ENCODE measurements at regions of chr7 and their contacts with region 1.

Region 1: DNA sequence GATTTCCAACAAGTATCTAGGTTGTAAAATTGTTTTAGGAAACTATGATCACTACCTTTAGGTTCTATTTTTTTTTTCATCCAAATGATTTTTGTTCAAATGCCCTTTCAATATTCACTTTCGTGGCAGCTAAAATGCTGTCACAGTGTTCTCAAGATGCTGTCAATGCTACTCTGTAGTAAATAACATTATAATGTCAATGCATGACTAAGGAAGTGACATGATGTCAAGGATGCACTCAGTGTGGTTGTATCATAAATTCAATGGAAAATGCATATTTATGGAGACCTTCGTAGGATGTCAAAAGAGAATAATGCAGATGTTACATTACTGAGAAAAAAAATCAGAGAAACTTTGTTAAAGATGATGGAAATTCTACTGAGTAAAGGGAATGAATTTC is 673.8 kb downstream of the ANKRD7 start:
- DNase-seq: no peak
- H3K4me3 ChIP-seq: no peak overlapping the region
- H3K4me3 Mint-ChIP-seq: no peak overlapping the region
- H3K27ac ChIP-seq: no peak overlapping the region
- H3K27ac Mint-ChIP-seq: no peak overlapping the region
- H3K4me1 ChIP-seq: no peaks in the 10 kb centered on the region
- H3K4me1 Mint-ChIP-seq: no peaks in the 10 kb centered on the region
- H3K27me3 ChIP-seq: no peaks in the 10 kb centered on the region
- H3K27me3 Mint-ChIP-seq: no peaks in the 10 kb centered on the region

Region 2: DNA sequence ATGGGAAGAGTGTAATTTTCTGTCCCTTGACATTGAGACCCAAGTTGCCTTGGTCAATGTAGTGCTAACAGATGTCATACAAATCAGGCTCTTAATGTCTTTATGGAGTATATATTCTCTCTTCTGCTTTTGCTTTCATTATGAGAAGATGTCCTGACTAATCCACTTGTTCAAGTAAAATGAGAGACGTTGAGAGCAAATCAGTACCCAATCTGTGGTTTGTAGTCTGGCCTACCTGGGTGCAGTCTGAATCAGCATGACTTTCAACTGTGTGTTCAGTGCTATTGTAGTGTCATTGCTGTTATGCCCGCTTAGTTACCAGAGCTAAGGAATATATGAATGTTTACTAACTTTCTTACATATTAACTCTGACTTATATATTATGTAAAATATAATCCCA is 61.4 kb before region 1 on chr7:
- CTCF ChIA-PET with region 1: no interaction called
- POLR2A ChIA-PET with region 1: no interaction called
- intact Hi-C with region 1: loop called (anchors 10 kb)
- DNase-seq: no peak
- H3K4me3 ChIP-seq: no peak overlapping the region
- H3K4me3 Mint-ChIP-seq: no peak overlapping the region
- H3K27ac ChIP-seq: no peak overlapping the region
- H3K27ac Mint-ChIP-seq: no peak overlapping the region
- H3K4me1 ChIP-seq: no peaks in the 10 kb centered on the region
- H3K4me1 Mint-ChIP-seq: no peaks in the 10 kb centered on the region
- H3K27me3 ChIP-seq: no peaks in the 10 kb centered on the region
- H3K27me3 Mint-ChIP-seq: no peaks in the 10 kb centered on the region